Calu3 (cell line): ENCODE measurements at regions of chr6 and their contacts with region 1.

Region 1: GRCh38 chr6:117555882-117556498 is 46.3 kb downstream of the GOPC start:
- DNase-seq: peak; percentile 61
- H3K4me3 Mint-ChIP-seq: no peak overlapping the region
- H3K27ac Mint-ChIP-seq: peak overlapping the region; percentile 10
- H3K4me1 Mint-ChIP-seq: no peaks in the 10 kb centered on the region
- H3K27me3 Mint-ChIP-seq: no peaks in the 10 kb centered on the region
- CTCF ChIP-seq: peak; percentile 72

Region 2: GRCh38 chr6:117346142-117346930 is 209.7 kb before region 1 on chr6:
- CTCF ChIA-PET with region 1: interaction called, 3 read pairs
- intact Hi-C with region 1: loop called (anchors 2 kb)
- DNase-seq: no peak
- H3K4me3 Mint-ChIP-seq: no peak overlapping the region
- H3K27ac Mint-ChIP-seq: peak overlapping the region; percentile 8
- H3K4me1 Mint-ChIP-seq: no peaks in the 10 kb centered on the region
- H3K27me3 Mint-ChIP-seq: peaks cover 12% of the 10 kb centered on the region
- CTCF ChIP-seq: peak; percentile 56

Region 3: DNA sequence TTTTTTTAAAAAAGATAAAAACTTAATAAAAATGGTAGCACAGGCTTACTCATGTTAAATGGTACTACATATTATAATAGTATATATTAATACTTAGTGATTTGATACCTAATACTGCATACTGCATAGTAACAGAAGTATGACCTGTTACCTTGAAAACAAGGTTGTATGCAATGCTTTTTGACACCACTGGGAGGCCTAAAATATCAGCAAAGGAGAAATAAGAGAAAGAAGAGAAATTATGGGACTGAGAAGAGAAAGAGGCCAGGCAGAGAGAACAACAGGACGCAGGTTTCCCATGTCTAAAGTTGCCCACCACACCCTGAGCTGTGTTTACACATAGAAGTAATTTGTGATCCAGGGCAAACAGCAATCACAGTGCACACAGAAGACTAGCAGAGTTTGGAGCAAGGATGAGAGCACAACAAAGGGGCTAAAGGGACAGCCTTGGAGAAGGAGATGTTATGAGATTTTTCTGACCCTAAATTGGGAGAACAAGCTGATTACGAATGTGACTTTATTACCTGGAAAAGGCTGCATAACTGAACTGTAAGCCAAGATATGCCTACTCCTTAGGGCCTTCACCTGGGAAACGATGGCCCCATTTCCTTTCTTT is 203.4 kb before region 1 on chr6:
- CTCF ChIA-PET with region 1: interaction called, 3 read pairs
- intact Hi-C with region 1: loop called (anchors 2 kb)
- DNase-seq: peak; percentile 11
- H3K4me3 Mint-ChIP-seq: no peak overlapping the region
- H3K27ac Mint-ChIP-seq: no peak overlapping the region
- H3K4me1 Mint-ChIP-seq: peaks cover 8% of the 10 kb centered on the region
- H3K27me3 Mint-ChIP-seq: no peaks in the 10 kb centered on the region
- CTCF ChIP-seq: peak; percentile 19

Region 4: DNA sequence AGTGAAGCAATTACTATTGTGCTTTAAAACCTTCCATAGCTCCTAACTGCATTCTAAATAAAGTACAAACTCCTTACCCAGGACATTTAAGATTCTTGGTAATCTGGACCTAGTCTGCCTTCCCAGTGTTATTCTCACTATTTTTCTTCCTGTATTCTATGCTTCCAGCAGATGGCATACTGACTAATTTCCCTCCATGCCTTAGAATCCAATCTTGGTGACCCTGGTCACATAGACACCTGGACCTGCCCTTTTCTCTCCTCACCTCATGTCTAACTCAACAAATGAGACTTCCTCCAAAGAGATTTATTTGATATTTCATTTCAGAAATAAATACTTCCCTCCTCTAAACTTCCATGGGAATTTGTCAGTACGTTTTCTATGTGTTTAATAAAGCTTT is 156.1 kb before region 1 on chr6:
- CTCF ChIA-PET with region 1: no interaction called
- intact Hi-C with region 1: loop called (anchors 1 kb)
- DNase-seq: no peak
- H3K4me3 Mint-ChIP-seq: no peak overlapping the region
- H3K27ac Mint-ChIP-seq: no peak overlapping the region
- H3K4me1 Mint-ChIP-seq: no peaks in the 10 kb centered on the region
- H3K27me3 Mint-ChIP-seq: no peaks in the 10 kb centered on the region
- CTCF ChIP-seq: no peak

Region 5: DNA sequence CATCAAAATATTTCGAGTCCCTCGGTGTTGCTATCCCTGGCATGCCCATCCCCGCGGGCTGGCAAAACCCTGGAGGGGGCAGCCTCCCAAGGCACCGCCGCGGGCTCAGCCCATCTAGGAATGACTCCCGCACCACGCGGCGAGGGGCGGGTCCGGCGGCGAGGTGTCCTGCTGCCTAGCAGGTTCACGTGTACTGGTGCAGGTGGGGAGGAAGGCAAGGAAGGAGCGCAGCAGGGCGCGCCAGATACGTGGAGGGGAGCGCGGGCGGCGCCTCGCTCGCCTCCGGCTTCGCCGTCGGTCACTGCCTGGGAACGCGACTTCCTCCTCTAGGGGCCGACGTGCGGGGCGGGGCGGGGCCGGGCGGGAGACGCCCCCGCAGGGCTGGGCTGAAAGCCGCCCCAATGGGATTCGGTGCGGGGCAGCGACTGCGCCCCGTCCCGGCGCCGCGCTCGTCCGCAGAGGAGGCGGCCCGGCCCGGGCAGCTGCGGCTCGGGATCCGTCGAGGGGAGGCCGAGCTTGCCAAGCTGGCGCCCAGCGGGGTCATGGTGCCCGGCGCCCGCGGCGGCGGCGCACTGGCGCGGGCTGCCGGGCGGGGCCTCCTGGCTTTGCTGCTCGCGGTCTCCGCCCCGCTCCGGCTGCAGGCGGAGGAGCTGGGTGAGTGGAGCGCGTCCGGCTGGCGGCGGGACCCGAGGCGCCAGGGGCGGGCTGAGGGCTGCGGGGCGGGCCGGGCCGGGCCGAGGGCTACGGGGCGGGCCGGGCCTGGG is 73.6 kb before region 1 on chr6 and contains the start of gene DCBLD1:
- CTCF ChIA-PET with region 1: no interaction called
- intact Hi-C with region 1: loop called (anchors 1 kb)
- DNase-seq: peak; percentile 85
- H3K4me3 Mint-ChIP-seq: peak within 1 kb of the TSS; percentile 91
- H3K27ac Mint-ChIP-seq: peak within 1 kb of the TSS; percentile 84
- H3K4me1 Mint-ChIP-seq: peaks cover 39% of the 10 kb centered on the region
- H3K27me3 Mint-ChIP-seq: no peaks in the 10 kb centered on the region
- CTCF ChIP-seq: no peak
- total RNA-seq, gene DCBLD1: 22.3 and 28.2 TPM in 2 replicates

Region 6: GRCh38 chr6:117655380-117655779 is 99.4 kb after region 1 on chr6:
- CTCF ChIA-PET with region 1: no interaction called
- intact Hi-C with region 1: no loop called
- DNase-seq: no peak
- H3K4me3 Mint-ChIP-seq: no peak overlapping the region
- H3K27ac Mint-ChIP-seq: no peak overlapping the region
- H3K4me1 Mint-ChIP-seq: no peaks in the 10 kb centered on the region
- H3K27me3 Mint-ChIP-seq: no peaks in the 10 kb centered on the region
- CTCF ChIP-seq: no peak